ENCODE measurements at regions of chr6 and their contacts with region 1.

Region 1: GRCh38 chr6:99514089-99514488 is 1.1 kb downstream of the USP45 start:
- DNase-seq: peak in 3 of 4 experiments; percentile 17 to 47 (median 18)
- ATAC-seq: peak; percentile 1; the same call in 1 of the 3 replicates
- H3K4me3 ChIP-seq: peak overlapping the region; percentile 76
- H3K27ac ChIP-seq: peak overlapping the region; percentile 92
- H3K4me1 ChIP-seq: peaks cover 10 to 11% of the 10 kb centered on the region in 2 experiments; a peak in 3 of 5 replicates
- H3K27me3 ChIP-seq: no peaks in the 10 kb centered on the region
- CTCF ChIP-seq: no peak
- EP300 ChIP-seq: no peak
- POLR2A ChIP-seq: no peak
- RAD21 ChIP-seq: no peak

Region 2: GRCh38 chr6:99225172-99225571 is 288.9 kb before region 1 on chr6:
- CTCF ChIA-PET with region 1: no interaction called
- POLR2A ChIA-PET with region 1: no interaction called
- in situ Hi-C with region 1: no loop called
- intact Hi-C with region 1: no loop called
- DNase-seq: no peak
- ATAC-seq: no peak
- H3K4me3 ChIP-seq: no peak overlapping the region
- H3K27ac ChIP-seq: no peak overlapping the region
- H3K4me1 ChIP-seq: no peaks in the 10 kb centered on the region
- H3K27me3 ChIP-seq: no peaks in the 10 kb centered on the region
- CTCF ChIP-seq: no peak
- EP300 ChIP-seq: no peak
- POLR2A ChIP-seq: no peak
- RAD21 ChIP-seq: no peak

Region 3: GRCh38 chr6:99568103-99568933 is 54.2 kb after region 1 on chr6 and contains the start of gene CCNC:
- CTCF ChIA-PET with region 1: no interaction called
- POLR2A ChIA-PET with region 1: interaction called, 6 read pairs
- in situ Hi-C with region 1: no loop called
- intact Hi-C with region 1: loop called (anchors 2 kb)
- DNase-seq: peak; percentile 84 to 93 (median 88)
- ATAC-seq: peak; percentile 96
- H3K4me3 ChIP-seq: peak within 1 kb of the TSS; percentile 91
- H3K27ac ChIP-seq: peak within 1 kb of the TSS; percentile 90
- H3K4me1 ChIP-seq: peaks cover 0 to 11% of the 10 kb centered on the region in 2 experiments; a peak in 1 of 5 replicates
- H3K27me3 ChIP-seq: no peaks in the 10 kb centered on the region
- CTCF ChIP-seq: peak in 1 of 3 experiments; percentile 26; a peak in 1 of 6 replicates
- EP300 ChIP-seq: peak; percentile 54; the same call in 1 of the 2 replicates
- POLR2A ChIP-seq: peak; percentile 93
- RAD21 ChIP-seq: peak in 1 of 2 experiments; percentile 20; a peak in 2 of 4 replicates
- polyA plus RNA-seq, gene CCNC: 133 to 177 TPM

Measured in K562 (cell line).